Panc1 (cell line): ENCODE measurements at regions of chr5 and their contacts with region 1.

Region 1: DNA sequence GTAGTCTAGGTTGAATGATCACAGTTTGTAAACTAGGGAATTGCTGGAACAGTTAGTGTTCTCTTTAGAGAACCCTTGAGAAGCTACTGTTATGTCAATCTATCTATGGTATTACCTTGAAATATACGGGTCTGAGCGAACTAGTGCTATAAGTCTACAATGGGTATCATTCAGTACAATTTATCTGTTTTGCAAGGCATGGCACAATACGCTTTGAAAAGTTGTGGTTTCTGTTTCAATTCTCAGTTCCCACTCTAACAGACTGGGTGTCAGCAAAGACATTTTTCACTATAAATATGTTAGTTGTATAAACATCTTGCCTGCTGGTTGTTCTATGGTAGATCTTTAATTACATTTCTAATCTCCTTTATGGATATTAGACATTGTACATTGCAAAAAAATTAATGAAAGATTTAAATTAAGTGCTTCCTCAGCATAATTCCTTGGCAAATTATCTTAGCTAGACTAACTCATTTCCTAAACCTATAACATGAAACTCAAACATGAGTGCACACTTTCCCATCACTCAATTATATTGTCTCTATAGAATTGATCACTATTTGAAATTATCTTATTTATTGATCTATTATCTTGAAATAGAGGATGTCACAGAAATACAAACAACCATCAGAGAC is 24.9 kb upstream of the SLCO6A1 start:
- DNase-seq: no peak
- ATAC-seq: no peak
- H3K4me3 ChIP-seq: no peak overlapping the region
- H3K27ac ChIP-seq: no peak overlapping the region
- H3K4me1 ChIP-seq: no peaks in the 10 kb centered on the region
- H3K27me3 ChIP-seq: no peaks in the 10 kb centered on the region
- CTCF ChIP-seq: no peak

Region 2: GRCh38 chr5:101424530-101425175 is 1099.0 kb before region 1 on chr5:
- CTCF ChIA-PET with region 1: no interaction called
- POLR2A ChIA-PET with region 1: no interaction called
- in situ Hi-C with region 1: no loop called
- intact Hi-C with region 1: no loop called
- DNase-seq: peak; percentile 8
- ATAC-seq: no peak
- H3K4me3 ChIP-seq: no peak overlapping the region
- H3K27ac ChIP-seq: no peak overlapping the region
- H3K4me1 ChIP-seq: no peaks in the 10 kb centered on the region
- H3K27me3 ChIP-seq: no peaks in the 10 kb centered on the region
- CTCF ChIP-seq: no peak

Region 3: DNA sequence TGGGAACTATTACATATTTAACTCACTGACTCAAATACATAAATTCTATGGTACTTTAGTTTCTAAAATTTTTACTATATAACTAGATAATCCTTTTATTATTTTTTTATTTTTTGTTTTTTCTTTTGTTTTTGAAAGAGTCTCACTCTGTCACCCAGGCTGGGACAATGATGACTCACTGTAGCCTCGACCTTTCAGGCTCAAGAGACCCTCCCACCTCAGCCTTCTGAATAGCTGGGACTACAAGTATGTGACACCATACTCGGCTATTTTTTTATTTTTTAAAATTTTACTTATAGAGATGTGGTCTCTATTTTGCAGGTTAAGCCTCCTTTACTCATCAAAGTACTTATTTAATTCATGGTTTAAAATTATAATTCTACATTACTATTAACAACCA is 135.4 kb before region 1 on chr5:
- CTCF ChIA-PET with region 1: no interaction called
- POLR2A ChIA-PET with region 1: no interaction called
- in situ Hi-C with region 1: no loop called
- intact Hi-C with region 1: no loop called
- DNase-seq: no peak
- ATAC-seq: no peak
- H3K4me3 ChIP-seq: no peak overlapping the region
- H3K27ac ChIP-seq: no peak overlapping the region
- H3K4me1 ChIP-seq: no peaks in the 10 kb centered on the region
- H3K27me3 ChIP-seq: no peaks in the 10 kb centered on the region
- CTCF ChIP-seq: no peak

Region 4: DNA sequence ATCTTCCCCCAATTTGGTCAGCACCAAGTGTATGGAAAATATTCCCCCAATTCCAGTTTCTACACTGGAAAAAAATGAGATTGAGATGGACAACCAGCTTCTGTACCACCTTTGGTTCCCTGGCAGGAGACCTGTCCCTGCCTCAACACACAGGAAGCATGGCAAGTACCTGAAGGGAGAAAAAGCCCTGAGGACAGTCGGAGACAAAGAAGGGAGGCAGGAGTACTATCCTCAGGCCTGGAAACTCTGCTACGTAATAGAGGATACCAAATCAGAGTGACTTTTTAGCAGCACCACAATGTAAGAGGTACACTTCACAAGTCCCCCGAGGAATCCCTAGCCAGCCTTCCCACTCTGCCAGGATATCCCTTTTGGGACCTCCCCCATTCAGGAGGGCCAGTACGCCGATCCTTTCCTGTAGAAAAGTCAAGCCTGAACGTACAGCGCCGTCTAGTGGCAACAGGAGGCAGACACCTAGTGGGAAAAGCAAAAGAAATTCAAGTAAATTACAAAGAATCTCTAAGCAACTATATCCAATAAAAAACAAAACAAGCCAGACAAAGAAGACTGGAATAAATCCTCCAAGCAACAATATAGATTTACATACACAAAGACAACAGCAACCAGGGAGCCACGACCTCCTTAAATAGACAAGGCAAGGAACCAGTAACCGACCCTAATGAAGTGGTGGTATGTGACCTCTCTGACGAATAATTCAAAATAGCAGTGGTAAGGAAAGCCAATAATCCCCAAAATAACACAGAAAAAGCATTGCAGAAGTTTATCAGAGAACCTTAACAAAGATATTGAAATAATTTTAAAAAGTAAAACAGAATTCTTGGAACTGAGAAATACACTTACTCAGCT is 38.5 kb after region 1 on chr5:
- CTCF ChIA-PET with region 1: interaction called, 13 read pairs
- POLR2A ChIA-PET with region 1: no interaction called
- in situ Hi-C with region 1: no loop called
- intact Hi-C with region 1: no loop called
- DNase-seq: no peak
- ATAC-seq: no peak
- H3K4me3 ChIP-seq: no peak overlapping the region
- H3K27ac ChIP-seq: no peak overlapping the region
- H3K4me1 ChIP-seq: no peaks in the 10 kb centered on the region
- H3K27me3 ChIP-seq: no peaks in the 10 kb centered on the region
- CTCF ChIP-seq: peak; percentile 76